Activated T-helper 1 cell treated with anti-CD3 and anti-CD28 coated beads, Interleukin-12 subunit alpha, Interleukin-12 subunit beta, Interleukin-2, Interleukin-4 antibody, amounts not matched to agents 30 ng/mL and 10 ng/mL and 1 ng/mL, durations not matched to agents 14 hours and 24 hours and 36 hours (primary cell): ENCODE measurements at regions of chr4 and their contacts with region 1.

Region 1: GRCh38 chr4:128553686-128554515 is 255.6 kb upstream of the JADE1 start:
- DNase-seq: no peak
- H3K4me3 Mint-ChIP-seq: peak overlapping the region; percentile 88
- H3K27ac Mint-ChIP-seq: no peak overlapping the region
- H3K4me1 Mint-ChIP-seq: peaks cover 13% of the 10 kb centered on the region
- H3K27me3 Mint-ChIP-seq: peaks cover 7% of the 10 kb centered on the region

Region 2: GRCh38 chr4:128454281-128455075 is 99.4 kb before region 1 on chr4:
- intact Hi-C with region 1: loop called (anchors 5 kb)
- DNase-seq: peak; percentile 20
- H3K4me3 Mint-ChIP-seq: no peak overlapping the region
- H3K27ac Mint-ChIP-seq: no peak overlapping the region
- H3K4me1 Mint-ChIP-seq: peaks cover 4% of the 10 kb centered on the region
- H3K27me3 Mint-ChIP-seq: peaks cover 11% of the 10 kb centered on the region

Region 3: DNA sequence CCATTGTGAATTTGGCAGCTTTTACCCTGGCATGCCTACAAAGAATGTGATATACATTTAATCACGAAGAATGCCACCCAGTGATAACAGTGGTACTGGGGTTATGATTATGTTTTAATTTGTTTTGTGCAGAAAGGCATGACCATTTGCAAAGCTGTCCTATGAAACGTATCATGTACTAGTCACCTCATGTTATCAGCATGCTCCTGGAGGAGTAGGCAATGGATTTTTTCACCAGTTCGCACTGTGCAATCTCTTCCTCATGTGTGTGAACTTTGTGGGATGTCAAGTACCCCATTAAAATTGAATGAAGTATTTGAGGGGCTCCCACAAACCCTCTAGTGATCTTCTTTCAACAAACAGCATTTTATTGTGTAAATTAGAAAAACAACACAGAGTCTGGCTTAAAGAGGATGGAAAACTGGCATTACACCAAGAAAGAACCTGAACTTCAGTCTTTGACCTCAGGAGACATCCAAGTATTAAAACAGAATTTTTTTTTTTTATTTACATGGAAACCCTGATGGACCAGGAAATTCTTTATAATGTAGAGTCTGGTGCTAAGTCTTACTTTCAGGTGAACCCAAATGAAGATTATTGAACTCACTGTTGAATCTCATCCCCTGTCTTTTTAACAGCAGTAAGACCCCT is 65.7 kb before region 1 on chr4:
- intact Hi-C with region 1: no loop called
- DNase-seq: no peak
- H3K4me3 Mint-ChIP-seq: no peak overlapping the region
- H3K27ac Mint-ChIP-seq: no peak overlapping the region
- H3K4me1 Mint-ChIP-seq: no peaks in the 10 kb centered on the region
- H3K27me3 Mint-ChIP-seq: no peaks in the 10 kb centered on the region

Region 4: GRCh38 chr4:128517739-128518510 is 36.0 kb before region 1 on chr4:
- intact Hi-C with region 1: loop called (anchors 5 kb)
- DNase-seq: no peak
- H3K4me3 Mint-ChIP-seq: no peak overlapping the region
- H3K27ac Mint-ChIP-seq: no peak overlapping the region
- H3K4me1 Mint-ChIP-seq: peaks cover 25% of the 10 kb centered on the region
- H3K27me3 Mint-ChIP-seq: peaks cover 5% of the 10 kb centered on the region